ENCODE measurements at regions of chr13 and their contacts with region 1.

Region 1: DNA sequence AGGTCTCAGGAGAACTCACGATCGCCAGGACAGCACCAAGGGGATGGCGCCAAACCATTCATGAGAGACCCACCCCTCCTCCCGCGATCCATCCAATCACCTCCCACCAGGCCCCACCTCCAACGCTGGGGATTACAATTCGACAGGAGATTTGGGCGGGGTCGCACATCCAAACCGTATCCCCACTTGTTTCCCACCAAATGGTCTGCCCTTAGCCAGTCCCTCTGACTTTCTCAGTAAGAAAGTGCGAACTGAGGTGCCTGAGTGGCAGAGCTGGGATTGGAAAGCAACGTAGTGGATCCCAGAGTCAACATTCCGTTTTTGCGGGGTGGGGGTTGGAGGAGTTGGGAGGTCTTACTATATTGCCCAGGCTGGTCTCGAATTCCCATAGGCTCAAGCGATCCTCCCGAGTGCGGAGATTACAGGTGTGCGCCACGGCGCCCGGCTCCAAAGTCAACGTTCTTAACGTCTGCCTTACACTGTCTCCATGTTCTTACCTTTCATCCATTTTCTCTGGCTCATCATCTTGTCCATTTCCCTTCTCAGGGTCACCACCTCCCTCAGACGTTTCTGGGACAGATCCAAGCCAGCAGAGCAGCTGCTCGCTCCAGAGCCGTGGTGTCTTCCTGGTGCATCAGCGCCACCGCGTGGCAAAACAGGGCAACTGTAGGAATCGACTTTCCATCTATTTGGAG is 102.7 kb upstream of the ABCC4 start:
- DNase-seq: peak; percentile 68 to 75 (median 71)
- H3K4me3 ChIP-seq: peak overlapping the region; percentile 56 to 58
- H3K4me3 Mint-ChIP-seq: peak overlapping the region; percentile 90 to 97 (median 93)
- H3K27ac ChIP-seq: no peak overlapping the region
- H3K27ac Mint-ChIP-seq: peak overlapping the region in 4 of 7 donors; percentile 76 to 92 (median 83)
- H3K4me1 ChIP-seq: peaks cover 5% of the 10 kb centered on the region
- H3K4me1 Mint-ChIP-seq: peaks cover 7 to 11% (median 8%) of the 10 kb centered on the region in 4 donors
- H3K27me3 ChIP-seq: no peaks in the 10 kb centered on the region
- H3K27me3 Mint-ChIP-seq: peaks cover 2 to 11% of the 10 kb centered on the region in 2 donors

Region 2: GRCh38 chr13:94435604-94436226 is 968.3 kb before region 1 on chr13:
- CTCF ChIA-PET with region 1: no interaction called
- POLR2A ChIA-PET with region 1: no interaction called
- intact Hi-C with region 1: loop called (anchors 5 kb)
- DNase-seq: peak in 4 of 5 donors; percentile 38 to 52 (median 44)
- H3K4me3 ChIP-seq: no peak overlapping the region
- H3K4me3 Mint-ChIP-seq: no peak overlapping the region
- H3K27ac ChIP-seq: no peak overlapping the region
- H3K27ac Mint-ChIP-seq: no peak overlapping the region
- H3K4me1 ChIP-seq: no peaks in the 10 kb centered on the region
- H3K4me1 Mint-ChIP-seq: peaks cover 0 to 3% (median 0%) of the 10 kb centered on the region in 4 donors
- H3K27me3 ChIP-seq: no peaks in the 10 kb centered on the region
- H3K27me3 Mint-ChIP-seq: peaks cover 0 to 1% of the 10 kb centered on the region in 2 donors

Region 3: GRCh38 chr13:95295026-95295425 is 108.9 kb before region 1 on chr13:
- CTCF ChIA-PET with region 1: interaction called, 73 read pairs
- POLR2A ChIA-PET with region 1: no interaction called
- intact Hi-C with region 1: loop called (anchors 1 kb)
- DNase-seq: no peak
- H3K4me3 ChIP-seq: no peak overlapping the region
- H3K4me3 Mint-ChIP-seq: no peak overlapping the region
- H3K27ac ChIP-seq: no peak overlapping the region
- H3K27ac Mint-ChIP-seq: peak overlapping the region in 1 of 7 donors; percentile 41
- H3K4me1 ChIP-seq: no peaks in the 10 kb centered on the region
- H3K4me1 Mint-ChIP-seq: peaks cover 16 to 25% (median 20%) of the 10 kb centered on the region in 4 donors
- H3K27me3 ChIP-seq: no peaks in the 10 kb centered on the region
- H3K27me3 Mint-ChIP-seq: no peaks in the 10 kb centered on the region

Region 4: DNA sequence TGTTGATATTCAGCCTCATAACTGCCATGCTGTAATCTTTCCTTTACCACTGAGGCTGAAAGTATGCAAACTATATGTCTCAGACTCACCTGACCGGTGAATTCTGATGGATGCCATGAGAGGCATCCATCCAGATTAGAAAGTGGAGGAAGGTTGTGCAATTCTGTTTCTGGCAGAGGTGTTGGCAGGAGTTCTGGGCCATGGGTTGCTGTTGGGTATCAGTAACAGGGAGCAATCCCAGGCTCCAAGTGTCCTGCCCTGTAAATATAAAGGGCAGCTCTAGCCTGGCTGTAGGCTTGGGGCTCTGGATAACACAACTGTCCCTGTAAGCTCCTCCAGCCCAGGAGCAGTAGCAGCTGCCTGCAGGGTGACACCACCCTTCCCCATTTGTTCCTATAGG is 25.4 kb before region 1 on chr13:
- CTCF ChIA-PET with region 1: interaction called, 25 read pairs
- POLR2A ChIA-PET with region 1: no interaction called
- intact Hi-C with region 1: no loop called
- DNase-seq: no peak
- H3K4me3 ChIP-seq: no peak overlapping the region
- H3K4me3 Mint-ChIP-seq: no peak overlapping the region
- H3K27ac ChIP-seq: no peak overlapping the region
- H3K27ac Mint-ChIP-seq: no peak overlapping the region
- H3K4me1 ChIP-seq: no peaks in the 10 kb centered on the region
- H3K4me1 Mint-ChIP-seq: peaks cover 3 to 6% (median 4%) of the 10 kb centered on the region in 4 donors
- H3K27me3 ChIP-seq: no peaks in the 10 kb centered on the region
- H3K27me3 Mint-ChIP-seq: peaks cover 2 to 7% of the 10 kb centered on the region in 2 donors

Region 5: DNA sequence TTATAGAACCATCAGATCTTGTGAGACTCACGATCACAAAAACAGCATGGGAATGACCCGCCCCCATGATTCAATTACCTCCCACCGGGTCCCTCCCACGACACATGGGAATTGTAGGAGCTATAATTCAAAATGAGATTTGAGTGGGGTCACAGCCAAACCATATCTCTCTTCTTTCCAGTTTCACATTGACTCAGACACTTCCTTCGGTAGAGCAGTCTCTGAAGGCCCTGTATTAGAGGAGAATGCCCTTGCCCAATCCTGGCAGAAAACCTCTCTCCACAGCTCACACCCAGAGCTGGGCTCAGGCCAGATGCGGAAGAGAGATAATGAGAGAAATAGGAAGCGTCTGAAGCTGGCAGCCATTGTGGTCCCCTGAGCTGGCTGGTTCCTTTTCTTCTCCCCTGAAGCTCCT is 76.2 kb after region 1 on chr13:
- CTCF ChIA-PET with region 1: interaction called, 7 read pairs
- POLR2A ChIA-PET with region 1: no interaction called
- intact Hi-C with region 1: loop called (anchors 1 kb)
- DNase-seq: no peak
- H3K4me3 ChIP-seq: no peak overlapping the region
- H3K4me3 Mint-ChIP-seq: peak overlapping the region in 1 of 8 donors; percentile 35
- H3K27ac ChIP-seq: no peak overlapping the region
- H3K27ac Mint-ChIP-seq: no peak overlapping the region
- H3K4me1 ChIP-seq: no peaks in the 10 kb centered on the region
- H3K4me1 Mint-ChIP-seq: peaks cover 4 to 8% (median 8%) of the 10 kb centered on the region in 4 donors
- H3K27me3 ChIP-seq: no peaks in the 10 kb centered on the region
- H3K27me3 Mint-ChIP-seq: peaks cover 0 to 1% of the 10 kb centered on the region in 2 donors